MCF 10A (cell line): ENCODE measurements at regions of chr12 and their contacts with region 1.

Region 1: DNA sequence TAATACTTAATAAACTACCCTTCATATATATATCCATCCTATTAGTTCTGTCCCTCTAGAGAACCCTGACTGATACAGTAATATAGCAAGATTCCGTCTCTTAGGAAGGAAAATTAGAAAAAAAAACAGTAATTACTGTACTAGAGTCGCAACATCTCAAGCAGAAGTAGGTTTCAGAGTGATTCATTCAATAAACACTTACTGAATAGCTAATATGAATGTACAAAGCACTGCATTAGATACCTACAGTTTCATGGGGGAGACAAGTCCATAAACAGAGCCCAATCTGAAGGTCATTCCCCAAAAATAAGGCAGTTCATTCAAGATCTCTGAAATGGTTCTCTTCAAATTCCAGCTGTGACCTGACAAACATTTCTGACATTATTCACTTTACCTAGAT is 9.9 kb downstream of the CERS5 start:
- DNase-seq: no peak
- H3K4me3 Mint-ChIP-seq: no peak overlapping the region
- H3K27ac Mint-ChIP-seq: peak overlapping the region; percentile 39
- H3K4me1 Mint-ChIP-seq: peaks cover 5% of the 10 kb centered on the region
- H3K27me3 Mint-ChIP-seq: no peaks in the 10 kb centered on the region
- CTCF ChIP-seq: no peak

Region 2: DNA sequence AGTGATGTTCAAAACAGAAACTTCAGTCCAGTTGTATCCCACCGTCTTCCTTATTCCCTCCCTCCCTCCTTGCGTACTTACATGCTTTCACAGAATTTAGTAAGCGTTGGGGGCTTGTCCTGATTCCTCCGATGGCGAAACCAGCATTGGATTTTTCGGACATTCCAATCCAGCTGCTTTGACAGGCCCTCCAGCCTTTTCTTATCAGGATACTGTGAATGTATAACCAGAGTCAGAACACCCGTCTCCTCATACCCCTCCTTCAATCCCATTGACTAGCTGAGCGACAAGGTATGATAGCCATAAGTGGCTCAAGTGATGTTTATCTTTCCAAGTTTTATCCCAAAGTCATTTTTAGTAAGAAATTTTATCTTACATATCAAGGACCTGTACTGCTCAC is 14.3 kb before region 1 on chr12:
- CTCF ChIA-PET with region 1: interaction called, 7 read pairs
- POLR2A ChIA-PET with region 1: interaction called, 12 read pairs
- intact Hi-C with region 1: no loop called
- DNase-seq: no peak
- H3K4me3 Mint-ChIP-seq: no peak overlapping the region
- H3K27ac Mint-ChIP-seq: no peak overlapping the region
- H3K4me1 Mint-ChIP-seq: no peaks in the 10 kb centered on the region
- H3K27me3 Mint-ChIP-seq: no peaks in the 10 kb centered on the region
- CTCF ChIP-seq: no peak

Region 3: DNA sequence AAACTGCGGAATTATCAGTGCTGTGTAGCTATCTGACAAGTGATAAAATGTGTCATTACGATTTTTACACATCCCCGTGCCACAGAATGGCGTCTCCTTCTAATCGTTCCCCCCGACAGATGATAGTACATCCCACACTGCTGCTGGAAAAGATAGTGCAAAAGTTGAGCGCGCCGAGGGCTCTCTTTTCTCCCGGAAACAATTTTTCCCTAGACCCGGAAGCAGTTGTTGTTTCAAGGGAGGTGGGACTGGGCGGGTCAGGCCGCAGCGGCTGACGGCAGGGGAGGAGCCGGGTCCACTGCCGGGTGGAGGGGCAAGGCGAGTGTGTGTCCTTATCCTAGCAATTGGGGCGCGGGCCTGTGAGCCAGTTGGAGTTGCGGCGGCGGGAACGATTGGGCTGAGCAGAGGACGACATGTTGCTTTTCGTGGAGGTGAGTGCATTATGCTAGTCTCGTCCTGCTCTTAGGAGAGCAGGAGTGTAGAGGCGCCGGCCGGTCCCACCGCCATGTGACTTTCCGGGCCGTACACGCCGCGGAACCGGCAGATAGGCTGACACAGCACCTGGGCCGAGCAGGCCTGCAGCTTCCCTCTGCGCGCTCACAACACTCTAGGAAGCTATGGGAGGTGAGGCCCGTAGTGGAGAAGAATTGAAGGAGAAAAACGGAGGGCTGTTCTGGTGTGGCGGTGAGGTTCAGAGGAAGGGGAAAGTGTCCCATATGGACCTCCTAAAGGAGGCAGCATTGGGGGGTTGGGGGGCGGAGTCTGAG is 243.5 kb after region 1 on chr12 and contains the start of gene LARP4:
- CTCF ChIA-PET with region 1: no interaction called
- POLR2A ChIA-PET with region 1: no interaction called
- intact Hi-C with region 1: no loop called
- DNase-seq: peak; percentile 96
- H3K4me3 Mint-ChIP-seq: peak within 1 kb of the TSS; percentile 97
- H3K27ac Mint-ChIP-seq: peak within 1 kb of the TSS; percentile 89
- H3K4me1 Mint-ChIP-seq: peaks cover 7% of the 10 kb centered on the region
- H3K27me3 Mint-ChIP-seq: no peaks in the 10 kb centered on the region
- CTCF ChIP-seq: no peak
- total RNA-seq, gene LARP4: 73.6 and 78.8 TPM in 2 replicates